PC-9 (cell line): ENCODE measurements at regions of chr16 and their contacts with region 1.

Region 1: DNA sequence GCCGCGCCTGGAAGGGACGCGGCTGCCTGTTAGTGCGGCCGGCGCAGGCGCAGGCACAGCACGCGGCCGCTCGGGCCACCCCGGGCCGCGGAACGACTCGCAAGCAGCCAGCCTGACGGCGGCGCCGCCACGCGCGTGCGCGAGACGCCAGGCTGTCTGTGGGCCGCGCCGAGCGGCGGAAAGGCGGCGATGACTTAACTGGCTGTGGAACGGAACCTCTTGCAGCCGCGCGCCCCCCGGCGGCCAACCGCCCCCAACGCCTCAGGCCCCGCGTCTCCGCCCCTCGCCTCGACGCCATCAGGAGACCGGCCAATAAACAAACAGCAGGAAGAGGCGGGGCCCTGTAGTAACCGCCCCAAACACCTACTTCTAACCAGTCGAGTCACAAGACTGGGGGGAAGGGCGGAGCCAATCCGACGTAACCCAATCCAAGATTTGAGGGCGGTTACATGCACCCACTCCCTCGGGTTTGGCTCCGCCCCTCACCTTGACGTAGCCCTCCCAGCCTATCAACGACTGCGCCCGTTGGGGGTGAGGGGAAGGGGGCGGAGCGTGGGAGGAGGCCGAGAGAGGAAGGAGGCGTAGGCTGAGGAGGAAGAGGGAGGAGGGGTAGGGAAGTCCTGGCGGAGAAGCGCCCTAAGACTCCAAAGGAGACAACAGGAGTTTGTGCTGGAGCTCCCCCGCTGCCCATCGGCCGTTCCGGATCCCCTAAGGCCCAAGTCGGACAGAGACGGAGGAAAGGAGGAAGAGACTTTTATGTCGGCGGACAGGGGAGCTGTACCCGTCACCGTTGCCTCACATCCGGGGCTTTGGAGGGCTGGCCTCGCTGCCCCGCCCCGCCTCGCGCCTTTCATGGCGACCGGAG is at the start of gene FBRS:
- DNase-seq: peak; percentile 100
- H3K4me3 ChIP-seq: peak within 1 kb of the TSS; percentile 68
- H3K27ac ChIP-seq: peak within 1 kb of the TSS; percentile 86
- H3K4me1 ChIP-seq: peaks cover 26% of the 10 kb centered on the region
- H3K27me3 ChIP-seq: no peaks in the 10 kb centered on the region
- CTCF ChIP-seq: peak; percentile 66
- total RNA-seq, gene FBRS: 87.5 and 128 TPM in 2 replicates

Region 2: GRCh38 chr16:30091474-30092372 is 566.4 kb before region 1 on chr16 and contains the start of gene TBX6:
- CTCF ChIA-PET with region 1: interaction called, 10 read pairs
- POLR2A ChIA-PET with region 1: interaction called, 4 read pairs
- intact Hi-C with region 1: loop called (anchors 10 kb)
- DNase-seq: peak; percentile 83 to 98
- H3K4me3 ChIP-seq: peak within 1 kb of the TSS; percentile 61
- H3K27ac ChIP-seq: peak within 1 kb of the TSS; percentile 87
- H3K4me1 ChIP-seq: peaks cover 55% of the 10 kb centered on the region
- H3K27me3 ChIP-seq: no peaks in the 10 kb centered on the region
- CTCF ChIP-seq: peak; percentile 72
- total RNA-seq, gene TBX6: 8.3 and 9.6 TPM in 2 replicates

Region 3: GRCh38 chr16:30378236-30379204 is 279.6 kb before region 1 on chr16:
- CTCF ChIA-PET with region 1: no interaction called
- POLR2A ChIA-PET with region 1: no interaction called
- intact Hi-C with region 1: loop called (anchors 2 kb)
- DNase-seq: peak; percentile 91 to 100
- H3K4me3 ChIP-seq: peak overlapping the region; percentile 80
- H3K27ac ChIP-seq: peak overlapping the region; percentile 92
- H3K4me1 ChIP-seq: peaks cover 19% of the 10 kb centered on the region
- H3K27me3 ChIP-seq: no peaks in the 10 kb centered on the region
- CTCF ChIP-seq: peak; percentile 18; the same call in 1 of the 2 replicates

Region 4: GRCh38 chr16:30521476-30521872 is 136.6 kb before region 1 on chr16:
- CTCF ChIA-PET with region 1: no interaction called
- POLR2A ChIA-PET with region 1: no interaction called
- intact Hi-C with region 1: no loop called
- DNase-seq: no peak
- H3K4me3 ChIP-seq: no peak overlapping the region
- H3K27ac ChIP-seq: no peak overlapping the region
- H3K4me1 ChIP-seq: 0 out of 2 replicates have a peak, but pooled peaks cover 3% of the 10 kb centered on the region
- H3K27me3 ChIP-seq: 0 out of 2 replicates have a peak, but pooled peaks cover 5% of the 10 kb centered on the region
- CTCF ChIP-seq: no peak

Region 5: DNA sequence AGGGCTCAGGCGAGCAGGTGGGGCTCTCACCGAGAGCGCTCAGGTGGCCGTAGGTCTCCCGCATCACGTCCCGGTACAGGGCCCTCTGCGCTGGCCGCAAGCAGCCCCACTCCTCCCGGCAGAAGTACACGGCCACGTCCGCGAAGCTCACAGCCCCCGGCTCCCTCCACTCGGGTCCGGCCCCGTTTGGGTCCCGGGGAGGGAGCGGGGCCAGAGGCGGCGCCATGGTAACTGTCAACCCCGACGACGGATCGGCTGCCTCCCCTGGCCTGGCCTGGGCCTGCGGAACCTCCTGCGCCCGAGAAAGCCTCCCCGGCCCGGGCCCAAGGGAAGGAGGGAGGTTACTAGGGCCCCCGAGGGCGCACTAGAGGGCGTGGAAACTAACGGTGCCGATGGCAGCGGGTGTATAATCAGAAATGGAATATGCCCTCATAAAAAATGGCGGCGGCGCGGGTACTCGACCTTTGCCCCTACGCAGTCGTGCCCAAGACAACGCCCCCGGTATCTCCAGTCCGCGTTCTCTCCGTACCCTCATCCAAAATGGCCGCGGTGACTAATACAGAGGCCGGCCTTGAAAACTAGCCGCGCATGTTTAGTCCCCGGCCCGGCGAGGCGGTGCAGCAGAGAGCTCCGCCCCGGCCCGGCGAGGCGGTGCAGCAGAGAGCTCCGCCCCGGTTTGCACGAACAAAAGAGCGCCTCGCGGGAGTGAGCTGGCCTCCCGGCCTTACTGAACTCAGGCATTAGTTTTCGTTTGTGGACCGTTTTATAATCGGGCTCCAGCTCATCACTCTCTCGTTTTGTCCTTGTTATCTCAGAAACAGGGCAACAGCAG is 99.9 kb before region 1 on chr16 and contains the start of gene ZNF764:
- CTCF ChIA-PET with region 1: no interaction called
- POLR2A ChIA-PET with region 1: interaction called, 3 read pairs
- intact Hi-C with region 1: loop called (anchors 1 kb)
- DNase-seq: peak; percentile 97 to 99
- H3K4me3 ChIP-seq: peak within 1 kb of the TSS; percentile 88
- H3K27ac ChIP-seq: peak within 1 kb of the TSS; percentile 64
- H3K4me1 ChIP-seq: peaks cover 19% of the 10 kb centered on the region
- H3K27me3 ChIP-seq: no peaks in the 10 kb centered on the region
- CTCF ChIP-seq: no peak
- total RNA-seq, gene ZNF764: 12.3 and 12.4 TPM in 2 replicates

Region 6: DNA sequence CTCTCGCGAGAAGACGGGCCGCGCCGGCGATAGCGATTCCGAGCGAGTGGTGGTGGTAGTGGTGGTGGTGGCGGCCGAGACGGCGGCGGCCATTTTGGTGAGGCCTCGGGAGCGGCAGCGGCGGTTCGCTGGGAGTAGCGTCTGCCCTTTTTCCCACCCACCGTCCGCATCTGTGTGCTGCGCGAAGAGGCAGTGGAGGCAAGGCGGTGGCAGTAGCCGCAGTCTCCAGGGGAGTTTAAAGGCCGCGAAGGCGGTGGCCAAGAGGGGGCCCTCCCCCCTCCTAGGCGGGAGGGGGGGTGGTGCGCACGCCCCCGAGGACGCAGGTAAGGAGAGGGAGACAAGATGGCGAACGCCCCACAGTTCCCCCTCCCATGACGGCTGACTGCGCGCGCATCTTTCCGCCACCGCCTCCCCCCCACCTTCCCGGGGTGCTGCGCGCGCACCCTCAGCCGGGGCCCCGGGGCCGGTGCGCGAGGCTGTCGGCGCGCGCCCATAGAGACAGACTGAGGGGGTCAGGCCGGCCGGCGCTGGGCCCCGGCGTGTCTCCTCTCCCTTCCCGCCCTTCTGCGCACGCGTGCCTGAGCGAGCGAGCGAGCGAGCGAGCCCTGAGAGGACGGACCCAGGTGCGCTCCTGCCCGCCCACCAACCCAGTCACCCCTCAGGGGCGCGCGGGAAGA is 40.2 kb after region 1 on chr16:
- CTCF ChIA-PET with region 1: interaction called, 3 read pairs
- POLR2A ChIA-PET with region 1: interaction called, 4 read pairs
- intact Hi-C with region 1: loop called (anchors 1 kb)
- DNase-seq: peak; percentile 91 to 99
- H3K4me3 ChIP-seq: peak overlapping the region; percentile 96
- H3K27ac ChIP-seq: peak overlapping the region; percentile 95
- H3K4me1 ChIP-seq: peaks cover 22% of the 10 kb centered on the region
- H3K27me3 ChIP-seq: no peaks in the 10 kb centered on the region
- CTCF ChIP-seq: no peak

Region 7: GRCh38 chr16:30761928-30762810 is 104.1 kb after region 1 on chr16 and contains the starts of genes CFAP119 and RNF40:
- CTCF ChIA-PET with region 1: no interaction called
- POLR2A ChIA-PET with region 1: interaction called, 4 read pairs
- intact Hi-C with region 1: loop called (anchors 1 kb)
- DNase-seq: peak; percentile 96 to 99
- H3K4me3 ChIP-seq: peak within 1 kb of the TSS; percentile 83
- H3K27ac ChIP-seq: peak within 1 kb of the TSS; percentile 2; the same call in 1 of the 2 replicates
- H3K4me1 ChIP-seq: peaks cover 24% of the 10 kb centered on the region
- H3K27me3 ChIP-seq: no peaks in the 10 kb centered on the region
- CTCF ChIP-seq: no peak
- total RNA-seq, gene CFAP119: 17.9 and 19.9 TPM in 2 replicates
- total RNA-seq, gene RNF40: 149 and 178 TPM in 2 replicates

Region 8: DNA sequence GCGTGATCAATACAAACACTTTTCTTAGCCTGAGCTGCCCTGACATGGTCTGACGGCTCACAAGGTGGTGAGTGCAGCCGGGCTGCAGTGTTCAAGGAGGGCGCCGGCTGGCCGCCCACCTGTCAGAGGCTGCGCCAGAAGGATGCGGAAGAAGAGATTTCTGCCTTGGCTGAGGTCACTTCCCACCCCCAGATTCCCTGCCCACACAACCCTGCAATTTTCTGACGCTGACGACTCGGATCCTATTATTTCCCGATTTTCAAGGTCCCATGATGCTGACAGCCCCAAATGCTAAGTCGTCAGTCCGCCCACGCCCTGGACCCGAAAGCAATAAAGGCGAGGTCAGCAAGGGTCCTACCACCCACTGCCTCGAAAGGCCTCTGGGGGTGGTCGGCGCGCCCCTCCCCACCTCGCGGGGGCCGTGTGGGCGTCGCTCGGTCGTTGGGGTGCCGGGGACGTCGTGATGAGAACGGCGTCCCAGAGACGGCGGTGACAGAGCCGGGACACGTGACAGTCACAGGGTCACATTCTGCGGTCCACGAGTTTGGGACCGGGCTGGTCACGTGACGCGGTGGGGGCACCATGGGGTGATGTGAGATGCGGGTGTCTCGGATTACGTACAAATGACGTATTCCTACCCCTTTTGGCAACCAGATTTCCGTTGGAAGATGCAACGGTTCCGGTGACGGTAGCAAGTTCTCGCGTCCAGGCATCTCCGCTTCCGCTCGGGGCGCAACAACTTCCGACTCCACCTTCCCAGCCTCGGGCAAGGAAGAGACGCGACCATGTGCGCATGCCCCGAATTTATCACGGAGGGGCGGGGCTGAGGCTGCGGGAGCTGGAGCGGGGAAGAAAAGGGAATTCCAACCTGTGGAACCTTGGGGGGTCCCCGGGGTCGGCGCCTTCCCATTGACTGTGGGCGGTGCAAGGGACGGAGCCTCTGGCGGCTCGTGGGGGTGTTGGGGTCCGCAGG is 374.9 kb after region 1 on chr16 and contains the start of gene STX4:
- CTCF ChIA-PET with region 1: no interaction called
- POLR2A ChIA-PET with region 1: no interaction called
- intact Hi-C with region 1: loop called (anchors 2 kb)
- DNase-seq: peak; percentile 93 to 99
- H3K4me3 ChIP-seq: peak within 1 kb of the TSS; percentile 87
- H3K27ac ChIP-seq: peak within 1 kb of the TSS; percentile 62
- H3K4me1 ChIP-seq: peaks cover 12% of the 10 kb centered on the region
- H3K27me3 ChIP-seq: no peaks in the 10 kb centered on the region
- CTCF ChIP-seq: no peak
- total RNA-seq, gene STX4: 85.8 and 100 TPM in 2 replicates